Cardiac septum (tissue), 1 donor: ENCODE measurements at regions of chr11 and their contacts with region 1.

Region 1: GRCh38 chr11:112588252-112588694 is 327.6 kb upstream of the PLET1 start:
- DNase-seq: no peak

Region 2: DNA sequence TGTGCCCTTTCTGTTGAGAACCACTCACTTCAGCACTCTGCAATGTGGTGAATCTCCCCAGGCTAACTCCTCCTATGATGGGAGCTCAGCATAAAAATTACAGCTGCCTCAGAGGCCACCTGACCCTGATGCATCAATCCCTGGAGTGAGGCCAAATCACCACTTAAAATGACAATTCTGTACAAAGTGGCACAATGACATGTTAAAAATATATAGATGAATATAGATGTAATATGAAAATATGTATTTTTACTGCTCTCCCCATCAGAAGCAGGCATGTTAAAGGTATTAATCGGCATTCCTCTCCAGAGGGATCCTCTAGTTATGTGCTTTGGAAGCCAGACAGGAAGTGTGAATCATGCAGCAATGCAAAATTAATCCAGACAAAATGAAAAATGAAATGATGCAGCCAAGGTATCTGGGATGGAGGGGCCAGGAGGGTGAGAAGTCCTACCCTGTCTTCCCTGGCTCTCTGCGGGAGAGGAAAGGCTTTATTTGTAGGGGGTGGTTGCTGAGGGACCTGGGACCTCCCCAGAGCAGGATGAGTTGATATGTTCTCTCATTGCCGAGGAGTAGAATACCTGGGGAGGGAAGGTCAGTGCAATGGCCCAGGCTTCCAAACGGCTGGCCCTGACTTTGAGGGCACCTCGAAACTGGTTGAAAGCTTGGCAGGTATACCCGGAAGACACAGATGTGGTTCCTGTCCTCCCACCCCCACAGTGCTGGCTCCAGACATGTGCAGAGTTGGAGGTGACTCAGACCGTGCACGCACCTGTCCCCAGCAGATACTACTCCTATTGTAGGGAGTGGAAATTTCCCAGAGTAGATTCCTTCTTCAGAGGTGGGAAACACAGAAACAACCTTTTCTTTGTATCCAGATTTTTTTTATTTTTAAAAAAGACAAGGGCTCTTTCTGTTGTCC is 25.0 kb after region 1 on chr11:
- intact Hi-C with region 1: no loop called
- DNase-seq: no peak

Region 3: GRCh38 chr11:112795142-112795815 is 207.0 kb after region 1 on chr11:
- intact Hi-C with region 1: loop called (anchors 5 kb)
- DNase-seq: no peak

Region 4: DNA sequence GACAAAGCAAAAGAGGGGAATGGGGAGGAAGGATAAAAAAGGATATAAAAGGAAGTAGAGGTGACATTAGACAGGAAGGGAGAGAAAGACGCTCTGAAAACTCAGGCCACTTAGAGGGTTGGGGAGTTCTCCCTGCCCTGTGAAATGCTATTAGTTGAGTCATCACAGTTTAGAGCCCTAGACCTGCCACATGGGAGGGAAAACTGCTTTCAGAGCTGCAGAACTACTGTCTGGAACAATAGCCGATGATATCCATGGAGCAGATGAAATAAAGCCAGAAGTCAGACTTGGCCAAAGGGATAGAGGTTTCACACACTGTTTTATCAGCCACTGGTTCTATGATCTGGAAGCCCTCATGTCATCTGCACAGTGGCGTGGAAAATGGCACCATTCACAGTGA is 530.8 kb after region 1 on chr11:
- intact Hi-C with region 1: loop called (anchors 5 kb)
- DNase-seq: no peak

Region 5: DNA sequence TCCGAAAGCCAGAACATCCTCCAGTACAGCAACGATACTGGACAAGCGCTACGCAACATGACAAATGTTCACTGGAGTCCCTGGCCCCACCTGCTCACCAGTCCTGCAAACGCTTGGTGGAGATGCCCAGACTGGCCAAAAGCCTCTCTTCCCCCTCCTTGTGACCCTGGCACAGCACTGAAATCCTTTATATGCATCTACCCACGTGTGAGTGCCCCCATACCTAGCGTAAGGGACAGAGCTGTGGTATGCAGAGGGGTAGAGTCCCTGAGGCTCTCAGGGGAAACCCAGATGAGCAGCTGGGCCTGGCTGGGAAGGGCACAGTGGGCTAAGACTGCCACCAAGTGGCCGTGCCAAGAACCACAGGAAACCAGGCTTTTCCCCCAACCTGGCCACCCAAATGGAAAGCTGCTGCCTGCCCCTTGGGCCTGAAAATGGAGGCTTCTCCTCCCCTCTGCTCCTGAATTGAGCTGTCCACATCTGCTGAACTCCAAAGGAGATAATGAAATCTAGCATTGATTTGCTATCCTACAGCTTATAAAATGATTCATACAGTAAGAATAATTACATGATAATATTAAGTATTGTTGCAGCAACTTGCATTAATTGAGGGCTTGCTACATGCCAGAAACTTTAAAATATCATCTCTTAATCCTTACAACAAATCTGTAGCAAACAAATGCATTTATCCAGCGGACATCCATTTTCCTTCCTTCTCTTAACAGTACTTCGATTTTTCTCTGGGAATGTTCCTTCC is 701.3 kb after region 1 on chr11:
- intact Hi-C with region 1: loop called (anchors 2 kb)
- DNase-seq: peak; percentile 83